Caco-2 (cell line): ENCODE measurements at regions of chr12 and their contacts with region 1.

Region 1: DNA sequence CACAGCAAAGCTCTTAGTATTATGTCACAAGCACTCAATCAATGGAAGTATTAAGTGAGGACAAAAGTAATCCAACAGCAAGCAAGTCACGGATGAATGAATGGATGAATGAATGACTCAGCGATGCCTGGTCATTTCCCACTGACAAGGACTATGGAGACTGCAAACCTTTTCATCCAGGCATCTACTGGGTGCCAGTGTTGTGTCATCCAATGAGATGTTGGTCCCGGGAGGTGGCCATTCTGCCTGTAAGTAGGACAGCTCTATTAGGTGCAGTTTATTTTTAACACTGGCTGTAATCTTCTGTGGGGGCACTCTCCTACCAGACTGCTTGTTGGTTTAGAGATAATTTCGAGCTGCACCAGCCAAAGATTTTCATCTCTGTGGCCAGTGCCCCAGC is 39.4 kb downstream of the STAB2 start:
- DNase-seq: peak; percentile 45 to 68
- H3K4me3 ChIP-seq: no peak overlapping the region
- H3K4me3 Mint-ChIP-seq: no peak overlapping the region
- H3K27ac Mint-ChIP-seq: no peak overlapping the region
- H3K4me1 ChIP-seq: no peaks in the 10 kb centered on the region
- H3K4me1 Mint-ChIP-seq: no peaks in the 10 kb centered on the region
- H3K27me3 ChIP-seq: no peaks in the 10 kb centered on the region
- H3K27me3 Mint-ChIP-seq: peaks cover 4% of the 10 kb centered on the region
- CTCF ChIP-seq: peak; percentile 24 to 41

Region 2: GRCh38 chr12:103742349-103742932 is 115.9 kb after region 1 on chr12:
- CTCF ChIA-PET with region 1: no interaction called
- POLR2A ChIA-PET with region 1: no interaction called
- intact Hi-C with region 1: loop called (anchors 10 kb)
- DNase-seq: no peak
- H3K4me3 ChIP-seq: no peak overlapping the region
- H3K4me3 Mint-ChIP-seq: no peak overlapping the region
- H3K27ac Mint-ChIP-seq: no peak overlapping the region
- H3K4me1 ChIP-seq: no peaks in the 10 kb centered on the region
- H3K4me1 Mint-ChIP-seq: no peaks in the 10 kb centered on the region
- H3K27me3 ChIP-seq: no peaks in the 10 kb centered on the region
- H3K27me3 Mint-ChIP-seq: peaks cover 7% of the 10 kb centered on the region
- CTCF ChIP-seq: no peak

Region 3: DNA sequence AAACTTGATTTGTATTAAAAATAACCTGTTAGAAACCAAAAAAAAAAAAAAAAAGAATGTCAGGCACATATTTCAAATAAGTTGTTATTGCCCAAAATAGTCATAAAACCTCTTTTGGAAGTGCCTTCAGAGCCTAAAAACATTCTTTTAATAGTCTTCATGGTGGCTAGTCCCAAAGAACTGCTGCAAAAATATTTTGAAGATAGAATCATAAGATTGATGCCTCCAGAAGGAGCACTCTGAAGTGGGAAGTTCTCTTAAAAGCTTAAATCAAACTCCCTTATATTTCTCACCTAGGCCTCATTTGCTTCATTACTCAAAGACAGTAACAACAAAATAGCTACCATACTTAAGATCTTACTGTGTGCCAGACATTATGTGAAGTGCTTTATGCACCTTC is 241.7 kb after region 1 on chr12:
- CTCF ChIA-PET with region 1: no interaction called
- POLR2A ChIA-PET with region 1: no interaction called
- intact Hi-C with region 1: loop called (anchors 2 kb)
- DNase-seq: no peak
- H3K4me3 ChIP-seq: no peak overlapping the region
- H3K4me3 Mint-ChIP-seq: no peak overlapping the region
- H3K27ac Mint-ChIP-seq: no peak overlapping the region
- H3K4me1 ChIP-seq: no peaks in the 10 kb centered on the region
- H3K4me1 Mint-ChIP-seq: no peaks in the 10 kb centered on the region
- H3K27me3 ChIP-seq: no peaks in the 10 kb centered on the region
- H3K27me3 Mint-ChIP-seq: no peaks in the 10 kb centered on the region
- CTCF ChIP-seq: no peak

Region 4: GRCh38 chr12:103877934-103878510 is 251.5 kb after region 1 on chr12:
- CTCF ChIA-PET with region 1: no interaction called
- POLR2A ChIA-PET with region 1: no interaction called
- intact Hi-C with region 1: loop called (anchors 2 kb)
- DNase-seq: peak; percentile 67 to 73
- H3K4me3 ChIP-seq: no peak overlapping the region
- H3K4me3 Mint-ChIP-seq: no peak overlapping the region
- H3K27ac Mint-ChIP-seq: no peak overlapping the region
- H3K4me1 ChIP-seq: no peaks in the 10 kb centered on the region
- H3K4me1 Mint-ChIP-seq: no peaks in the 10 kb centered on the region
- H3K27me3 ChIP-seq: no peaks in the 10 kb centered on the region
- H3K27me3 Mint-ChIP-seq: peaks cover 2% of the 10 kb centered on the region
- CTCF ChIP-seq: peak; percentile 76 to 82